HEK293T (cell line): ENCODE measurements at regions of chr6 and their contacts with region 1.

Region 1: DNA sequence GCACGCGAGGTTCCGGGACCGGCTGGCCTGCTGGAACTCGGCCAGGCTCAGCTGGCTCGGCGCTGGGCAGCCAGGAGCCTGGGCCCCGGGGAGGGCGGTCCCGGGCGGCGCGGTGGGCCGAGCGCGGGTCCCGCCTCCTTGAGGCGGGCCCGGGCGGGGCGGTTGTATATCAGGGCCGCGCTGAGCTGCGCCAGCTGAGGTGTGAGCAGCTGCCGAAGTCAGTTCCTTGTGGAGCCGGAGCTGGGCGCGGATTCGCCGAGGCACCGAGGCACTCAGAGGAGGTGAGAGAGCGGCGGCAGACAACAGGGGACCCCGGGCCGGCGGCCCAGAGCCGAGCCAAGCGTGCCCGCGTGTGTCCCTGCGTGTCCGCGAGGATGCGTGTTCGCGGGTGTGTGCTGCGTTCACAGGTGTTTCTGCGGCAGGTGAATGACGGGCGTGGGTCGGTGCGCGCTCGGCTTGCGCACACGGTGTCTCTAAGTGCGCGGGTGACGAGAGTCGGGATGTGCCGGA is at the start of gene CDKN1A:
- DNase-seq: peak; percentile 80

Region 2: DNA sequence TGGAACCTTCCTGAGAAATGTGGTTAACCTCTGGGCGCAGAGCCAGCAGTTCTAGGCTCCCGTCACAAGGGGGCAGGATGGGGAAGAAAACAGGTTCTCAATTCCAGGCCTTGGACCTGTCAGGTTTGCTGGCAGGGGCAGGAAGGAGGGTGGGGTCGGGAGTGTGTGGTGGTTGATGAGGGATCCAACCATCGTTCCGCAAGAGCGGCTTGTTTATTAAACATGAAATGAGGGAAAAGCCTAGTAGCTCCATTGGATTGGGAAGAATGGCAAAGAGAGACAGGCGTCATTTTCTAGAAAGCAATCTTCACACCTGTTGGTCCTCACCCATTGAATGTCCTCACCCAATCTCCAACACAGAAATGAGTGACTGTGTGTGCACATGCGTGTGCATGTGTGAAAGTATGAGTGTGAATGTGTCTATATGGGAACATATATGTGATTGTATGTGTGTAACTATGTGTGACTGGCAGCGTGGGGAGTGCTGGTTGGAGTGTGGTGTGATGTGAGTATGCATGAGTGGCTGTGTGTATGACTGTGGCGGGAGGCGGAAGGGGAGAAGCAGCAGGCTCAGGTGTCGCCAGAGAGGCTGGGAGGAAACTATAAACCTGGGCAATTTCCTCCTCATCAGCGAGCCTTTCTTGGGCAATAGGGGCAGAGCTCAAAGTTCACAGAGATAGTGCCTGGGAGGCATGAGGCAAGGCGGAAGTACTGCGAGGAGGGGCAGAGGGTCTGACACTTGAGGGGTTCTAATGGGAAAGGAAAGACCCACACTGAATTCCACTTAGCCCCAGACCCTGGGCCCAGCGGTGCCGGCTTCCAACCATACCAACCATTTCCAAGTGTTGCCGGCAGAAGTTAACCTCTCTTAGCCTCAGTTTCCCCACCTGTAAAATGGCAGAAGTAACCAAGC is 54.8 kb before region 1 on chr6:
- CTCF ChIA-PET with region 1: interaction called, 25 read pairs
- POLR2A ChIA-PET with region 1: interaction called, 19 read pairs
- DNase-seq: peak; percentile 85

Region 3: DNA sequence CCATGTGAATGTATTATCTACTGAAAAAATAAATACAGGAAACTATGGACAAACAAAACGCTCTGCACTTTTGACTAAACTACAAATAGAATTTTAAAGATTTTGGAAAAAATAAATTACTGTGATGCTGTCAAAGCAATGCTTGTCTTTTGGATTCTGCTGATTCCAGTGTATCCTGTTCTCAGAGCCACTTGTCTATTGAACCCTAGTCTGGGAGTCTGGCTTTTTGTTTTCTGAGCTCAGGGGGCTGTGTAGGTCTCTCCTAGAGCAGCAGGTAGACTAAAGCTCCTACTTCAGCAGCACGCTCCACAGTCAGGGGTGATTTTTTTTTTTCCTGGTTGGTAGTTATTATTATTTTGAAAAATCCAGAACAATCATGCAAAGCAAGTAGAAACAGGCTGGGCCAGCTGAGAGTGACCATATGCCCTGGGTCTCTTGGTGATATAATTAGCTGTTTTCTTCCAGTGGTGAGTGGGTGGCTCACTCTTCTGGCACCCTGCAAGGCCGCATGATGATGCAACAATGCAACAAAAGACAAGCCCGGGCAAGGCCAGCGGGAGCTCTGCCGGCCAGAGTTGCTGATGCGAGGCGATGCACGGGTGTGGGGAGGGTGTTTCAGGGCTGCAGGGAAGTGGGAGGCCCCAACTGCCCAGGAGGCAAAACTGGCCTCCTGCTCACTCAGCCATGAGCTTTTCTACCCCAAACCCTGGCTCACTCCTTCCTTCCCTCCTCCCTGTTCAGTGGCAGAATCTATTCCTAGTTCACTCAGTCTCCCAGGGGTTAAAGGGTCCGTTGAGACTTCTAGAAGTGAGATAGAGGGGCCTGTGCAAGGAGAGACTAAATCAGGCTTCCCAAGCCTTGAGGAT is 11.6 kb before region 1 on chr6:
- CTCF ChIA-PET with region 1: interaction called, 7 read pairs
- POLR2A ChIA-PET with region 1: interaction called, 19 read pairs
- DNase-seq: peak; percentile 56

Region 4: DNA sequence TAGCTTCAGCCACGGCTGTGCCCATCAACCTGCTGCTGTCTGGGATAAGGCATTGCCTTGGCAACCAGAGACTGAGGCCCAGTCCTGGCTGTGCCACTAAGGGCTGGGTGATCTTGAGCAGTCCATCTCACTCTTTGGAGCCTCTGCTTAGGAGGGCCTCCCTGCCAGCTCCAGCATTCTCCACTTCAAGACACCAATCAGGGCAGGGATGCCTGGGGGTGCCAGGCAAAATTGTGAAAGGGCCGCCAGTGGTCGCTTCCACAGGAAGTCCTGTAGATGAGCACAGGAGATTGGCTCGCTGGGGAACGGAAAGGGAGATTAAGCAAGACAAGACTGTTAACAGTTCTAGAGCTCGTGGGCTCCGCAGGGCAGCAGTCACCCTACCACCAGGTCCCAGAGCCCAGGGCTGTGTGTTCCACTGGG is 18.9 kb after region 1 on chr6 and contains the start of gene RAB44:
- CTCF ChIA-PET with region 1: no interaction called
- POLR2A ChIA-PET with region 1: no interaction called
- DNase-seq: no peak

Region 5: DNA sequence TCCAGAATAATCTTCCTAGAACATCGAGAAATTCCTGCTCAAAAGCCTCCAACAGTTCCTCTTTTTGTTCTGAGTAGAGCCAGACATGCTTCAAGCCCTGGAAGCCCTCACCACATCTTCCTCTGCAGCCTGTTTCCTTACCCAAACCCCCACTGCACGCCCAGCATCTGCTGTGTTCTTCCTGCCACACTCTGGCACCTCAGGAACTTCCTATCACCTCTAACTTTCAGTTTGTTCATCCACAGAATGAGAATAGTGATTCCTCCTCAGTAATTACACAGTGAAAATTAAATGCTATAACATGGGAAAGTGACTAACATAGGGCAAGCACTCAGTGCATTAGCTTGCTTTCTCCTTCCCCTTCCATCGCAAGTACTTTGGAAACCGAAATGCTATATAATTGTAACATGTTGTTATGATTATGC is 233.5 kb after region 1 on chr6:
- CTCF ChIA-PET with region 1: no interaction called
- POLR2A ChIA-PET with region 1: no interaction called
- DNase-seq: no peak